ENCODE measurements at regions of chr17 and their contacts with region 1.

Region 1: GRCh38 chr17:3965118-3965803 is 1.0 kb upstream of the ATP2A3 start:
- DNase-seq: peak; percentile 83
- H3K4me3 Mint-ChIP-seq: peak overlapping the region; percentile 86
- H3K27ac Mint-ChIP-seq: peak overlapping the region; percentile 92
- H3K4me1 Mint-ChIP-seq: peaks cover 44% of the 10 kb centered on the region
- H3K27me3 Mint-ChIP-seq: no peaks in the 10 kb centered on the region

Region 2: GRCh38 chr17:3978421-3979279 is 13.4 kb after region 1 on chr17:
- CTCF ChIA-PET with region 1: interaction called, 12 read pairs
- POLR2A ChIA-PET with region 1: interaction called, 3 read pairs
- DNase-seq: no peak
- H3K4me3 Mint-ChIP-seq: no peak overlapping the region
- H3K27ac Mint-ChIP-seq: no peak overlapping the region
- H3K4me1 Mint-ChIP-seq: peaks cover 16% of the 10 kb centered on the region
- H3K27me3 Mint-ChIP-seq: no peaks in the 10 kb centered on the region